ENCODE measurements at regions of chr2 and their contacts with region 1.

Region 1: DNA sequence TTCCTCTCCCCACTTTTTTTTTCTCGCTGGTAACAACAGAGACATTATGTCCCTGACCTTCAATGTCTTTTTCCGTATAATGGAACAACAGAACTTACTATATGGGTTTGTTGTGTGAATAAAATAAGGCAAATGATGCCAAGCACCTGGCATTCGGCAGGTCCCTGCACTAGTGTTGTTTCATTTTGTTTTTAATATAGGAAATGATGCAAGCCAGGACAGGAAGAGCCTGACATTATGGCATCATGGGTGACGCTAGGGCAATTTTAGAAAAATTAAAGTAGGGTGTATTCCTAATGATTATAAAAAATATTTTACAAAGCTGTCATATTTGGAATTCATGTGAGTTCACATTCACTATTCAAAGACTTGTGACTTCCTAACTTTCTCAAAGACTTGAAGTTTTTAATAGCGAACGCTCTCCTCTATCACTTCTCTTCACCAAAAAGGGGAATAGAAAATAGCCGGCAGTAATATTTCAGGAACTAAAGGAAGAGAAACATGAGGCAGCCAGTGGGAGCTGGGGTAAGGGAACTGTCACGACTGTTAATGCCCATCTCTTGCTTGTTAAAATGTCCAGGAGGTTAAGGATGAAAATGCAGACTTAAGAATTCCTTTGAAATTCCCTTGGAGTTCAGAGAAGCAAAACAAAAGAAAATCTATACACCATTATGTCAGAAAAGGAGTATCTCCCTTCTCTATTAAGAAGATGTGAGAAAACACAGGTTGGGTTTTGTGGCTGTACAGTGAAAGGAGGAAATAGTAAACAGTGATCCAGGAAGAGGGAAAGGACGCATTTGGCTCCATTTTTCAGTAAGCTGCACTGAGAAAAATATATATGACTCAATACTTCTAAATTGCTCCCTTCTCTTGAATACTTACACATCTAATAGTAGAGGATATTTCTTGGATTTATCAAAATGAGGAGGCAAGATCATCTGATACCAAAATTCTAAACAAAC is 60.2 kb downstream of the DPP4 start:
- DNase-seq: peak; percentile 39 to 61 (median 48)
- H3K4me3 ChIP-seq: no peak overlapping the region
- H3K4me3 Mint-ChIP-seq: peak overlapping the region; percentile 58 to 84 (median 76)
- H3K27ac ChIP-seq: peak overlapping the region; percentile 72
- H3K27ac Mint-ChIP-seq: peak overlapping the region; percentile 92 to 100 (median 97)
- H3K4me1 ChIP-seq: peaks cover 71% of the 10 kb centered on the region
- H3K4me1 Mint-ChIP-seq: peaks cover 52 to 79% (median 64%) of the 10 kb centered on the region in 4 donors
- H3K27me3 ChIP-seq: no peaks in the 10 kb centered on the region
- H3K27me3 Mint-ChIP-seq: no peaks in the 10 kb centered on the region

Region 2: GRCh38 chr2:161136696-161137324 is 877.0 kb before region 1 on chr2:
- CTCF ChIA-PET with region 1: no interaction called
- POLR2A ChIA-PET with region 1: no interaction called
- intact Hi-C with region 1: loop called (anchors 1 kb)
- DNase-seq: peak; percentile 70 to 82 (median 74)
- H3K4me3 ChIP-seq: peak overlapping the region; percentile 48 to 90
- H3K4me3 Mint-ChIP-seq: peak overlapping the region; percentile 90 to 99 (median 95)
- H3K27ac ChIP-seq: peak overlapping the region; percentile 97
- H3K27ac Mint-ChIP-seq: peak overlapping the region; percentile 97 to 99 (median 99)
- H3K4me1 ChIP-seq: peaks cover 40% of the 10 kb centered on the region
- H3K4me1 Mint-ChIP-seq: peaks cover 34 to 55% (median 39%) of the 10 kb centered on the region in 4 donors
- H3K27me3 ChIP-seq: no peaks in the 10 kb centered on the region
- H3K27me3 Mint-ChIP-seq: no peaks in the 10 kb centered on the region

Region 3: GRCh38 chr2:161238560-161239325 is 775.1 kb before region 1 on chr2:
- CTCF ChIA-PET with region 1: no interaction called
- POLR2A ChIA-PET with region 1: no interaction called
- intact Hi-C with region 1: loop called (anchors 5 kb)
- DNase-seq: peak; percentile 59 to 75 (median 64)
- H3K4me3 ChIP-seq: peak overlapping the region in 1 of 2 donors; percentile 75
- H3K4me3 Mint-ChIP-seq: peak overlapping the region; percentile 88 to 99 (median 94)
- H3K27ac ChIP-seq: peak overlapping the region; percentile 44
- H3K27ac Mint-ChIP-seq: peak overlapping the region; percentile 70 to 97 (median 95)
- H3K4me1 ChIP-seq: peaks cover 48% of the 10 kb centered on the region
- H3K4me1 Mint-ChIP-seq: peaks cover 32 to 73% (median 46%) of the 10 kb centered on the region in 4 donors
- H3K27me3 ChIP-seq: no peaks in the 10 kb centered on the region
- H3K27me3 Mint-ChIP-seq: no peaks in the 10 kb centered on the region

Region 4: DNA sequence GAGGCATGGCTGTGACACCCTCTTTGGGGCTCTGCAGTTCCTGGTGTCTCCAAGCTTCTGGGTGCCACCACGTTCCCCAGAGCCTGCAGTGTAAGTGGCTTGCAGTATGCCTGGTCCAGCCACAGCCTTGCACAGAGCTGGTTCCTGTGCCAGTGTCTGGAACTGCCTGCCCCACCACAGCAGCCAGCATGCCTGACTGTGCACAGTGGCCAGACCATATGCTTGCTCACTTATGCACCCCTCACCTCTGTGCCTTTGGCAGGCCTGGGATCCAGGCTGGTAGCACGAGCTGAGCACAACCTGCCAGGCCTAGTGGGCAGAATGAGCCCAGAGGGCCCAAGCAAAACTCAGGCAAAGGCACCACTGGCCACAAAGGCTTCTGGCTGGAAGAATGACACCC is 93.9 kb before region 1 on chr2:
- CTCF ChIA-PET with region 1: no interaction called
- POLR2A ChIA-PET with region 1: no interaction called
- intact Hi-C with region 1: no loop called
- DNase-seq: peak in 1 of 5 donors; percentile 11
- H3K4me3 ChIP-seq: no peak overlapping the region
- H3K4me3 Mint-ChIP-seq: no peak overlapping the region
- H3K27ac ChIP-seq: no peak overlapping the region
- H3K27ac Mint-ChIP-seq: no peak overlapping the region
- H3K4me1 ChIP-seq: no peaks in the 10 kb centered on the region
- H3K4me1 Mint-ChIP-seq: peaks cover 0 to 9% (median 0%) of the 10 kb centered on the region in 4 donors
- H3K27me3 ChIP-seq: no peaks in the 10 kb centered on the region
- H3K27me3 Mint-ChIP-seq: no peaks in the 10 kb centered on the region

Region 5: GRCh38 chr2:161992526-161992925 is 21.3 kb before region 1 on chr2:
- CTCF ChIA-PET with region 1: interaction called, 16 read pairs
- POLR2A ChIA-PET with region 1: interaction called, 33 read pairs
- intact Hi-C with region 1: loop called (anchors 1 kb)
- DNase-seq: peak; percentile 46 to 62 (median 57)
- H3K4me3 ChIP-seq: peak overlapping the region; percentile 20 to 36
- H3K4me3 Mint-ChIP-seq: peak overlapping the region; percentile 70 to 94 (median 84)
- H3K27ac ChIP-seq: peak overlapping the region; percentile 65
- H3K27ac Mint-ChIP-seq: peak overlapping the region; percentile 95 to 99 (median 98)
- H3K4me1 ChIP-seq: peaks cover 56% of the 10 kb centered on the region
- H3K4me1 Mint-ChIP-seq: peaks cover 41 to 72% (median 50%) of the 10 kb centered on the region in 4 donors
- H3K27me3 ChIP-seq: no peaks in the 10 kb centered on the region
- H3K27me3 Mint-ChIP-seq: no peaks in the 10 kb centered on the region

Region 6: GRCh38 chr2:162025121-162026031 is 11.6 kb after region 1 on chr2:
- CTCF ChIA-PET with region 1: interaction called, 30 read pairs
- POLR2A ChIA-PET with region 1: interaction called, 45 read pairs
- intact Hi-C with region 1: no loop called
- DNase-seq: no peak
- H3K4me3 ChIP-seq: no peak overlapping the region
- H3K4me3 Mint-ChIP-seq: peak overlapping the region in 3 of 8 donors; percentile 3 to 23 (median 17)
- H3K27ac ChIP-seq: no peak overlapping the region
- H3K27ac Mint-ChIP-seq: peak overlapping the region in 5 of 7 donors; percentile 53 to 89 (median 81)
- H3K4me1 ChIP-seq: peaks cover 13% of the 10 kb centered on the region
- H3K4me1 Mint-ChIP-seq: peaks cover 22 to 40% (median 33%) of the 10 kb centered on the region in 4 donors
- H3K27me3 ChIP-seq: no peaks in the 10 kb centered on the region
- H3K27me3 Mint-ChIP-seq: no peaks in the 10 kb centered on the region

Region 7: DNA sequence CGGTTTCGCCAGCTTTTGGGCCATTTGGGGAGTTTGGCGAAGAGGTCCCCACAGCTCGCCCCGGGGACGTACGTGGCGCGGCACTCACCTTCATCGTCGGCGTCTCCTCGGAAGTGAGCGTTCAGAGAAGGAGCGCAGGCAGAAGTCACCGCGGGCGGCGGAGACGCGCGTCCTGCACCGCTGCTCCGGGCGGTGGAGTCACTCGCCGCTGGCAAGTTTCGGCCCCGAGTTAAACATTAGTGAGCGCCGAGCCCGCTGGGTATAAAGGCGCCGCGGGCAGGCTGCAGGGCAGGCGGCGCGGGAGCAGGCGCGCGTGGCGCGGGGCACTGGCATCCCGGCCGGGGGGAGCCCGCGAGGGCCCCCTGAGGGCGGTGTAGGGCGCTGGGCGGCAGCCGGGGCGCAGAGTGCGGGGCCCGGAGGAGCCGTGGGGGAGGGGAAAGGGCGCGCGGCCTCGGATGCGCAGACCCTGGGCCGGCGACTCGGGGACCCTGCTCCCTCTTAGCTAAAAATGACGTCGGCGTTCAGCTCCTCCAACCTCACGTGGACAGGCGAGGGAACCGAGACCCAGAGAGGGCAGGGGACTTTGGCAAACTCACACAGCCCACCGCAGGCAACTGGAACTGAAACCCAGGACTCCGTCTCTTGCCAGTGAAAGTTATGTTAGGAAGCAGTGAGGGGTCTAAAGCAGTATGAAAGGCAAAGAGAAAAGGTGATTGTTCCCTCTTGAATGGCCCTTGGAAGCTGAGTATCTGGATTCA is 60.3 kb after region 1 on chr2 and contains the start of gene DPP4:
- CTCF ChIA-PET with region 1: interaction called, 20 read pairs
- POLR2A ChIA-PET with region 1: interaction called, 75 read pairs
- intact Hi-C with region 1: loop called (anchors 1 kb)
- DNase-seq: peak; percentile 52 to 64 (median 58)
- H3K4me3 ChIP-seq: peak within 1 kb of the TSS; percentile 68 to 76
- H3K4me3 Mint-ChIP-seq: peak within 1 kb of the TSS; percentile 95 to 100 (median 98)
- H3K27ac ChIP-seq: peak within 1 kb of the TSS; percentile 78
- H3K27ac Mint-ChIP-seq: peak within 1 kb of the TSS; percentile 86 to 98 (median 94)
- H3K4me1 ChIP-seq: peaks cover 45% of the 10 kb centered on the region
- H3K4me1 Mint-ChIP-seq: peaks cover 39 to 62% (median 48%) of the 10 kb centered on the region in 4 donors
- H3K27me3 ChIP-seq: no peaks in the 10 kb centered on the region
- H3K27me3 Mint-ChIP-seq: no peaks in the 10 kb centered on the region
- total RNA-seq, gene DPP4: 38.5 to 40.2 TPM

Region 8: GRCh38 chr2:162103446-162104009 is 89.7 kb after region 1 on chr2:
- CTCF ChIA-PET with region 1: no interaction called
- POLR2A ChIA-PET with region 1: no interaction called
- intact Hi-C with region 1: no loop called
- DNase-seq: no peak
- H3K4me3 ChIP-seq: no peak overlapping the region
- H3K4me3 Mint-ChIP-seq: no peak overlapping the region
- H3K27ac ChIP-seq: no peak overlapping the region
- H3K27ac Mint-ChIP-seq: peak overlapping the region in 1 of 7 donors; percentile 66
- H3K4me1 ChIP-seq: no peaks in the 10 kb centered on the region
- H3K4me1 Mint-ChIP-seq: peaks cover 0 to 2% (median 0%) of the 10 kb centered on the region in 4 donors
- H3K27me3 ChIP-seq: no peaks in the 10 kb centered on the region
- H3K27me3 Mint-ChIP-seq: peaks cover 0 to 2% of the 10 kb centered on the region in 2 donors

Region 9: GRCh38 chr2:162143969-162144368 is 130.2 kb after region 1 on chr2:
- CTCF ChIA-PET with region 1: no interaction called
- POLR2A ChIA-PET with region 1: no interaction called
- intact Hi-C with region 1: no loop called
- DNase-seq: no peak
- H3K4me3 ChIP-seq: no peak overlapping the region
- H3K4me3 Mint-ChIP-seq: no peak overlapping the region
- H3K27ac ChIP-seq: no peak overlapping the region
- H3K27ac Mint-ChIP-seq: no peak overlapping the region
- H3K4me1 ChIP-seq: no peaks in the 10 kb centered on the region
- H3K4me1 Mint-ChIP-seq: no peaks in the 10 kb centered on the region
- H3K27me3 ChIP-seq: peaks cover 4% of the 10 kb centered on the region
- H3K27me3 Mint-ChIP-seq: peaks cover 22 to 24% of the 10 kb centered on the region in 2 donors

Region 10: DNA sequence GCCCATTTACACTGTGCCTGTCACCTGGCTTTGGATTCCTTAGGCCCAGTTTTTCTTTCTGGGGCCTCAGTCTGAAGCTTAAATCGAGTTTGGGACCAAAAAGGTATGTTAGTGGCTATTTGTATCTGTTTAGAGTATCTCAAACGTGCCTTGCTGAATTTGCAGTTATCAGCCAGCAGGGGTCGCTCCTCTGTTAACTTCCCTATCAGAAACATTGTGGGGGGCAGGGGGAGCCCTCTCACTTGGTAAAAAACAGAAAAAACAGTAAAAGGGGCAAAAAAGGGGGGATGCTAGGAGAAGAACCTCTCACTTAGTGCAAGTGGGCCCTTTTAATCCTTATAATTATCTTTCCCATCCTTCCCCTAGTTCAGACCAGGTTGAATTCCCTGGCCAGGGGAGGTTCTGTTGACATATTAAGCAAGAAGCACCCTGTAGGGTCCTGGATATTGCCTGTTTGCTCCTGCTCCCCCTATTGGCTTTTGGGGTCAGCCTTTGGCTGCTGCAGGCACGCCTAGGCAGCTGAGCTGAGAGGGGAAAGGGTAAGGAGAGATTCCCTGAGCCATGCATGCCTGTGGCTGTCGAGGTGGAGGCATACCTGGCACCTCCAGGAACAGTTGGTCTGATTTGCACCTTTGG is 313.5 kb after region 1 on chr2:
- CTCF ChIA-PET with region 1: no interaction called
- POLR2A ChIA-PET with region 1: no interaction called
- intact Hi-C with region 1: no loop called
- DNase-seq: no peak
- H3K4me3 ChIP-seq: no peak overlapping the region
- H3K4me3 Mint-ChIP-seq: no peak overlapping the region
- H3K27ac ChIP-seq: no peak overlapping the region
- H3K27ac Mint-ChIP-seq: peak overlapping the region in 1 of 7 donors; percentile 10
- H3K4me1 ChIP-seq: no peaks in the 10 kb centered on the region
- H3K4me1 Mint-ChIP-seq: no peaks in the 10 kb centered on the region
- H3K27me3 ChIP-seq: no peaks in the 10 kb centered on the region
- H3K27me3 Mint-ChIP-seq: no peaks in the 10 kb centered on the region

Measured in CD4-positive, alpha-beta memory T cell (primary cell).